Ascending aorta (tissue), 2 donors: ENCODE measurements at regions of chr6 and their contacts with region 1.

Region 1: GRCh38 chr6:68967549-68968300 is 332.6 kb downstream of the ADGRB3 start:
- DNase-seq: peak in 1 of 2 donors; percentile 71
- H3K4me3 ChIP-seq: no peak overlapping the region
- H3K27ac ChIP-seq: no peak overlapping the region
- H3K4me1 ChIP-seq: no peaks in the 10 kb centered on the region
- H3K27me3 ChIP-seq: no peaks in the 10 kb centered on the region
- CTCF ChIP-seq: peak; percentile 28 to 79 (median 78)

Region 2: DNA sequence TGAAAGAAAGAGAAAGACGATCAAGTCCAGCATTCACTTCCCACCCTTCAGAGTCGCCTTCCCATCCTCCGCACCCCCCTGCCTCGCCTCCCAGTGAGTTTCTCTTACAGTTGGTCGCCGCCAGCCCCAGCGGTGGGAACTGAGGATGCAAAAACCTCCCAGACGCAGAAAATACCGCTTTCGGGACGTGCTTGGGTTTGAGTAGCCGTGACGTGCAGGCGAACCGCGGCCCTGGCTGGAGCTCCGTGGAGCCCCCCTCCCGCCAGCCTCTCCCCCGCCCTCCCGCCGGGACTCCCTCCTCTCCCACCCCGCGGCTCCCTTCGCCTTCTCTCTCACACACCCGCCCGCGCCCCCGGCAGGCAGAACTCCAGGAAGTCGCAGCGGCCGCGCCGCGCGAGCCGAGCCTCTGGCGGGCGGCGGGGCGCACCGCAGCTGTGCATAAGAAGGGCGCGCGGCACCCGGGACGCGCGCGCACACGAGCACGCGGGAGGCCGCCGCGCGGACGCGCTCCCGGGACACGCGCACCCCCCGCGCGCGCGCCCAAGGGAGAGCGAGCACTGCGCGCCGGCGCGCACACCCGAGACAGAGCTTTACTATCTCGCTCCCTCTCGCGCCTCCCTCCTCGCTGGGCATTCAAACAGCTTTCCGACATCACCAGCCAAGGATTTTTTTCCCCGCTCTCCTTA is 332.9 kb before region 1 on chr6 and contains the start of gene ADGRB3:
- intact Hi-C with region 1: loop called (anchors 5 kb)
- DNase-seq: peak; percentile 37 to 92
- H3K4me3 ChIP-seq: peak within 1 kb of the TSS; percentile 82 to 94
- H3K27ac ChIP-seq: peak within 1 kb of the TSS; percentile 82 to 87
- H3K4me1 ChIP-seq: no peaks in the 10 kb centered on the region
- H3K27me3 ChIP-seq: no peaks in the 10 kb centered on the region
- CTCF ChIP-seq: peak in 2 of 3 experiments; percentile 24 to 42
- total RNA-seq, gene ADGRB3: 4.4 TPM